Activated CD4-positive, alpha-beta T cell treated with anti-CD3 and anti-CD28 coated beads, Interleukin-2, amount 10 ng/mL, durations not matched to agents 24 days and 14 days (primary cell): ENCODE measurements at regions of chr17 and their contacts with region 1.

Region 1: GRCh38 chr17:45098869-45099616 is 33.3 kb downstream of the PLCD3 start:
- DNase-seq: peak; percentile 93
- H3K4me3 Mint-ChIP-seq: no peak overlapping the region
- H3K27ac Mint-ChIP-seq: no peak overlapping the region
- H3K4me1 Mint-ChIP-seq: peaks cover 3% of the 10 kb centered on the region
- H3K27me3 Mint-ChIP-seq: no peaks in the 10 kb centered on the region

Region 2: DNA sequence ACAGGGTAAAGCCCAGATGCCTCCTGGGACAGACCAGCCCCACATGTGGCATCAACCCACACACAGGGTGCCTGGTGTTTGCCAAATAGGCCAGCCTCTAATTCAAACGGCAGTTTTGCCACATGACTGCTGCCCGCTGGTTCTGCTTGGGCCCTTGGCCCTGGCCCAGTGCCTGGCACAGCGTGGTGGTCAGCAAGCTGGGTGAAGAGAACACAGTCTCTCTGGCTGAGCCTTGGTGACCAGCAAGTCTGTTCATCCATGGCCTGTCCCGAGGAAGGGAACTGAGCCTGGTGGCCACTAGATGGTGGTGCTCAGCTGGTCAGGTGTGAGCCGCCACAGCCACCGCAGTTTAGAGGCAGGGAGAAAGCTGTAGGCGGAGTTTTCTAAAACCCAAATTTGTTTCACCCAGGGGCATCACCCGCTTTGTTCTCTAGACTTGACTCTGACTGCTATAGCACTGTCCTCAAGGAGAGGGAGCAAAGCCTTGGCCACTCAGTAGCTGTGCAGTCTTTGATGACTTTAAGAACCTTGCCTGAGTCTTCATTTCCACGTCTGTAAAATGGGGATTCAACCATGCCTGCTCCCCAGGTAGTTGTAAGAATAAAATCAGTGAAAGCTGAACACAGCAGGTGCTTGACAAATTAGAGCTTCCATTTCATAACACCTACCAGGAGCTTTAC is 179.0 kb before region 1 on chr17:
- intact Hi-C with region 1: loop called (anchors 2 kb)
- DNase-seq: peak; percentile 88
- H3K4me3 Mint-ChIP-seq: no peak overlapping the region
- H3K27ac Mint-ChIP-seq: no peak overlapping the region
- H3K4me1 Mint-ChIP-seq: peaks cover 2% of the 10 kb centered on the region
- H3K27me3 Mint-ChIP-seq: peaks cover 29% of the 10 kb centered on the region

Region 3: GRCh38 chr17:45123930-45124796 is 25.1 kb after region 1 on chr17:
- intact Hi-C with region 1: no loop called
- DNase-seq: no peak
- H3K4me3 Mint-ChIP-seq: no peak overlapping the region
- H3K27ac Mint-ChIP-seq: no peak overlapping the region
- H3K4me1 Mint-ChIP-seq: no peaks in the 10 kb centered on the region
- H3K27me3 Mint-ChIP-seq: peaks cover 10% of the 10 kb centered on the region

Region 4: GRCh38 chr17:45332989-45333701 is 234.1 kb after region 1 on chr17:
- intact Hi-C with region 1: no loop called
- DNase-seq: peak; percentile 55
- H3K4me3 Mint-ChIP-seq: peak overlapping the region; percentile 39
- H3K27ac Mint-ChIP-seq: peak overlapping the region; percentile 67
- H3K4me1 Mint-ChIP-seq: peaks cover 24% of the 10 kb centered on the region
- H3K27me3 Mint-ChIP-seq: peaks cover 2% of the 10 kb centered on the region